ENCODE measurements at regions of chr6 and their contacts with region 1.

Region 1: GRCh38 chr6:17706580-17707370 is at the start of gene NUP153:
- DNase-seq: peak; percentile 99
- H3K4me3 Mint-ChIP-seq: peak within 1 kb of the TSS; percentile 87
- H3K27ac Mint-ChIP-seq: peak within 1 kb of the TSS; percentile 99
- H3K4me1 Mint-ChIP-seq: peaks cover 38% of the 10 kb centered on the region
- H3K27me3 Mint-ChIP-seq: no peaks in the 10 kb centered on the region
- total RNA-seq, gene NUP153: 74.0 to 91.0 TPM

Region 2: GRCh38 chr6:17688481-17688880 is 18.3 kb before region 1 on chr6:
- CTCF ChIA-PET with region 1: interaction called, 19 read pairs
- POLR2A ChIA-PET with region 1: no interaction called
- DNase-seq: no peak
- H3K4me3 Mint-ChIP-seq: no peak overlapping the region
- H3K27ac Mint-ChIP-seq: no peak overlapping the region
- H3K4me1 Mint-ChIP-seq: peaks cover 39% of the 10 kb centered on the region
- H3K27me3 Mint-ChIP-seq: no peaks in the 10 kb centered on the region

Measured in activated CD4-positive, alpha-beta T cell treated with anti-CD3 and anti-CD28 coated beads, Interleukin-2, amount 10 ng/mL, durations not matched to agents 7 days and 5 days (primary cell).